Naive thymus-derived CD8-positive, alpha-beta T cell (primary cell): ENCODE measurements at regions of chr1 and their contacts with region 1.

Region 1: DNA sequence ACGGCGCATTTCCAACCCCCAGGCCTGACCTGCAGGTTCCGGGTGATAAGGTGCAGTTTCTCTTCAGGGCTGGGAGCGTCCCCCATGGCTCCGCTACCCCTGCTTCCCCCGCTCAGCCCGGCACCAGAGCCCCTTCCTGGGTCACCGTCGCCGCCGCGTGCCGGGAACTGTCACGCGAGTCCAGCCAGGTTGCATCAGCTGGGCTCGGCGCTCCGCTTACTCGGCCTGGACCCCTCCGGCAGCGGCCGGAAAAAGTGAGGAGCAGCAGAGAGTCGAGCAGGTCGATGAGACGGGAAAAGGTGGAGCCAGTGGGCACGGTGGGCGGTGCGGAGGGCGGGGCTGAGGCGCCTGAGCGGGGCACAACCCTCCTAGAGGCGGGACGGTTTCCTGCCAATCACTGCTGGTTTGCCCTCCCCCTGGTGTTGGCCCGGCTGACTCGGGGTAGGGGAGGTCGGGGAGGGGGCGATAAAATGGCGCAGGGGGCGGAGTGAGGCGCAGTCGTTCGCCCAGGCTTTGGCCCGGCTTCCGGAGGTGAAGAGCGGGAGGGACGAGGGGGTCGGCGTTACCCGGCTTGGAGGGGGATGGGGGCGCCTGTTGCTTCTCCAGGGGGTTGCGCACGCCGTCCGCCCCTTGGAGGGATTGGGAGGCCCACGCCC is at the starts of genes S100PBP and YARS1:
- DNase-seq: peak; percentile 98 to 99 (median 99)
- ATAC-seq: peak; percentile 93 to 94
- H3K4me3 Mint-ChIP-seq: peak within 1 kb of the TSS; percentile 93 to 98 (median 96)
- H3K27ac Mint-ChIP-seq: peak within 1 kb of the TSS; percentile 71 to 97 (median 92)
- H3K4me1 Mint-ChIP-seq: peaks cover 28 to 72% (median 63%) of the 10 kb centered on the region in 4 donors
- H3K27me3 Mint-ChIP-seq: no peaks in the 10 kb centered on the region
- polyA plus RNA-seq, gene S100PBP: 5.0 to 9.6 (median 6.4) TPM
- polyA plus RNA-seq, gene YARS1: 45.0 to 60.2 (median 45.1) TPM

Region 2: DNA sequence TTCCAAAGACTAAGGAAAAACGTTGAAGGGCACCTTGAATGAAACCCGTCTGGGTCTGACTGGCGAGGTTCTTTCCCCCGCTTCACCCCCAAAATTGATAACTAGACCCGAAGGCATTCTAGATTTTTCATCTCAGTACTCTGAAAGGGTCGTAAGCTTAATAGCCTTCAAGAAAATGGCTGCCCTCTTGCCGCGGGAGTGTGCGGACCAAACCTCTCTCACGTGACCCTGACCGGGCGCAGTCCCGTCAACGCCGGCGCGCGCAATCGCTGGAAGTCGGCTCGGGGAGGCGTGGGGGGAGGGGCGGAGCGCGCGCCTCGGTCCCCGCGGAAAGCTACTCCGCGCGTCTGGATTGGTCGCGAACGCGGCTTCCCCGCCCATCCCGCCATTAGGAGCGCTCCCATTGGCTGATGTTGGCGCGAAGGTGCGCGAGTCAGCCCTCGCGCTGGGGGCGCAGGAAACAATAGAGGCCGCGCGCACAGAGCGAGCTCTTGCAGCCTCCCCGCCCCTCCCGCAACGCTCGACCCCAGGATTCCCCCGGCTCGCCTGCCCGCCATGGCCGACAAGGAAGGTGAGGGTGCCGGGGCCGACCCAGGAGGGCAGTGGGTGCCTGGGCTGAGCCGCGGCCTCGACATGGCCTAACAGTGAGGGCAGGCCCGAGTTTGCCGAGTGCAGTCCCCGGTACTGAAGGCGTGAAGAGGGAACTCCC is 166.4 kb before region 1 on chr1 and contains the start of gene RBBP4:
- POLR2A ChIA-PET with region 1: interaction called, 11 read pairs
- DNase-seq: peak; percentile 97 to 99 (median 98)
- ATAC-seq: peak; percentile 83 to 85
- H3K4me3 Mint-ChIP-seq: peak within 1 kb of the TSS; percentile 81 to 99 (median 96)
- H3K27ac Mint-ChIP-seq: peak within 1 kb of the TSS; percentile 97 to 100 (median 100)
- H3K4me1 Mint-ChIP-seq: peaks cover 21 to 71% (median 63%) of the 10 kb centered on the region in 4 donors
- H3K27me3 Mint-ChIP-seq: no peaks in the 10 kb centered on the region
- polyA plus RNA-seq, gene RBBP4: 226 to 251 (median 231) TPM

Region 3: DNA sequence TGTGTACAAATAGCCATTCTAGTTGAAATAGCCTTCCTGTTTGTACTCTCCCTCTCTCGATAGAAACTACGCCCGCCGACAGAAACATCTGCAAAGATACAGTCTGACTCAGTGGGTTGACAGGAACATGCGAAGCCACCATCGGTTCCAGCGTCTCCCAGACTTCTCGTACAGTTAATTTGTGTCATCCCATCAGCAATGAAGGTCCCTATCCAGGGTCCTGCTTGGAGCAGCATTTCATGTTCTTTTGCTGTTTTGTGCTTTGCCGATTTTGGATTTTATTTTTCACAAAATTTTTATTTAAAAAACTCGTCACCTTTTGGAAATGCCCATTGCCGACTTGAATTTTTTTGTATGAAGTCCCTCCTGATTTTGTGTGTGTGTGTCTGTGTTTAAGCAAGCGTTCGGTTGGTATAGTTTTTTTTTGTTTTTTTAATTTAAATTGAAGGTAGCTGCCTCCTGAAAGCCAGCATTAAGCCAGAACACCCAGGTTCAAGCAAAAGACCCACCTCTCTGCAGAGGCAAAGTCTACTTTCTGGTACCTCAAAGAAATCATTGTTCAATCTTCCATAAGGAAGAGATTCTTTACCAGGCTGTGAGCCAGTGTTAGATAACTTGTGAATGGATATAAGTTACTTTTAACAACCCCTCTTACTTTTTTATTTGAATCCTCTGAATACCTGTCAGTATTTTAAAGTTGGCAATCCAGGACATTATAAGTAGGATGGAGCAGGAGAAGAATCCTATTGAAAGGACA is 38.8 kb after region 1 on chr1:
- POLR2A ChIA-PET with region 1: no interaction called
- DNase-seq: no peak
- ATAC-seq: no peak
- H3K4me3 Mint-ChIP-seq: no peak overlapping the region
- H3K27ac Mint-ChIP-seq: no peak overlapping the region
- H3K4me1 Mint-ChIP-seq: no peaks in the 10 kb centered on the region
- H3K27me3 Mint-ChIP-seq: no peaks in the 10 kb centered on the region